PC-9 (cell line): ENCODE measurements at regions of chr2 and their contacts with region 1.

Region 1: DNA sequence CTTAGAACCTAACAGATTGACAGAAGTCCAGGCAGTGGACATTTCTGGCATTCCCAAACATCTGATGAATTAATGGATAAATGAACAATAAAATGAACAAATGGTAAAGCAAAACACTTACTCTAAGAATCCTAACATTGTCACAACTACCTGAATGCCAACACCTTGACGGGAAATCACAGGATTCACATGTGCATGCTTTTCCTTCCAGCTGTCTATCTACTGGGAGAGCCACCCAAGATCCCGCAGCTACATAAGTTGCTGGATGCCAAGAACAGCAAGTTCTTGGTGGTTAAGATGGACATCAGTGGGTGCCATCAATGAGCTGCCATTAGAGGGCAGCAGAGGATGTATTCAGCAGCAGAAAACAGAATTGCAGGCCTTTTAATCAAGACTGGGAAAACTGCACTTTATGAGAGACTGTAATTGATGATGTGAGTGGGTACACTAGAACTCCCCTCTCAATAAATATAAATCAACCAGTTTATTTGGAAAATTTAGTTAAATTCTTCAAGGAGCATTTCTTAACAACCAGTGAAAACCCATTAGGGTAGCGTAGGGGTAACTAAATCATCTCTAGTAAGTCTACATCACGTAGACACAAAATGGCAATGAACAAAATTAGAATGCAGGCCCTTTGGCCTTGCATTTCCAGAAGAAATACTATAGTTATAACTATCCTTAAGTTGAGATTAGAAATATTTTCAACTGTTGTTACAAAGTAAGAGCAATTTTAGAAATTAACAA is 45.6 kb downstream of the SESTD1 start:
- DNase-seq: peak; percentile 48 to 71
- H3K4me3 ChIP-seq: no peak overlapping the region
- H3K27ac ChIP-seq: no peak overlapping the region
- H3K4me1 ChIP-seq: peaks cover 15% of the 10 kb centered on the region; the same call in 1 of the 2 replicates
- H3K27me3 ChIP-seq: no peaks in the 10 kb centered on the region
- CTCF ChIP-seq: peak; percentile 99

Region 2: GRCh38 chr2:179340668-179341067 is 121.6 kb after region 1 on chr2:
- CTCF ChIA-PET with region 1: interaction called, 3 read pairs
- POLR2A ChIA-PET with region 1: no interaction called
- intact Hi-C with region 1: loop called (anchors 1 kb)
- DNase-seq: peak in 1 of 2 experiments; percentile 35
- H3K4me3 ChIP-seq: no peak overlapping the region
- H3K27ac ChIP-seq: no peak overlapping the region
- H3K4me1 ChIP-seq: peaks cover 22% of the 10 kb centered on the region
- H3K27me3 ChIP-seq: no peaks in the 10 kb centered on the region
- CTCF ChIP-seq: peak; percentile 72

Region 3: DNA sequence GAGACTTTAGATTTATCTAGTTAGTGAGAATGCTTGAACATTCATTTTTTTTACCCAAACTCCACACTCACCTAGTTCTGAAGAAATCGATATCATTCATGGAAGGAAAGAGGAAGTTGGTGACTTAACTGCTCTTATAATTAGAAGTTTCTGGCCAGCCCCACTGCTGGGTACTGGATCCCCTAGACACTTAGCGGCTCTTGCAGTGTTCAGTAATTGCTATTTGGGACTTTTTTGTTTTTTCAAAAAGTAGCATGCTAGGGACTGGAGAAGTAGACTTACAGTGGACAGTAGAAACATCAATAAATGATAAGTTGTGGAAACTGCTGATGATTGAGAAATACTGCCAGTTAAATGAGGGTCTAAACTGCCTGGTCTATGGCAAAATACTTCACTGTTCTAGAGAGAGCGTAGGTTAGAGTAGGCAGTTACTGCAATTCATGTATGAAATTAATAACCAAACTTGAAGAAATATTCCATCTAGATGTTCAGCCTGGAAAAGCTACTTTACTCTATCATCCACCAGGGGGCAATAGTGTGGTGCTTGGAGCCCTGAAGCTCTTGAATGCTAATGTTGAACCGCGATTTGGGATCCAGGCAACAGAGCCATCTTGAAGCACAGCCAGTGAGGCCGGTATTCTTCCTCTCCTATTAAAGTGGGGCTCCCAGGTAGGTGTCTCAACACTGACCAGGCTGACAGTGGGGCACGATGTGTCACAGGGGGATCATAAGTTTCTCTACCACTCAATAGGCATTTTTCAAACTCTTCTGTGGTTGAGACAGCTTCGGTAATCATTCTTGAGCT is 191.7 kb after region 1 on chr2:
- CTCF ChIA-PET with region 1: no interaction called
- POLR2A ChIA-PET with region 1: no interaction called
- intact Hi-C with region 1: loop called (anchors 1 kb)
- DNase-seq: peak; percentile 44 to 50
- H3K4me3 ChIP-seq: no peak overlapping the region
- H3K27ac ChIP-seq: no peak overlapping the region
- H3K4me1 ChIP-seq: no peaks in the 10 kb centered on the region
- H3K27me3 ChIP-seq: no peaks in the 10 kb centered on the region
- CTCF ChIP-seq: peak; percentile 82

Region 4: DNA sequence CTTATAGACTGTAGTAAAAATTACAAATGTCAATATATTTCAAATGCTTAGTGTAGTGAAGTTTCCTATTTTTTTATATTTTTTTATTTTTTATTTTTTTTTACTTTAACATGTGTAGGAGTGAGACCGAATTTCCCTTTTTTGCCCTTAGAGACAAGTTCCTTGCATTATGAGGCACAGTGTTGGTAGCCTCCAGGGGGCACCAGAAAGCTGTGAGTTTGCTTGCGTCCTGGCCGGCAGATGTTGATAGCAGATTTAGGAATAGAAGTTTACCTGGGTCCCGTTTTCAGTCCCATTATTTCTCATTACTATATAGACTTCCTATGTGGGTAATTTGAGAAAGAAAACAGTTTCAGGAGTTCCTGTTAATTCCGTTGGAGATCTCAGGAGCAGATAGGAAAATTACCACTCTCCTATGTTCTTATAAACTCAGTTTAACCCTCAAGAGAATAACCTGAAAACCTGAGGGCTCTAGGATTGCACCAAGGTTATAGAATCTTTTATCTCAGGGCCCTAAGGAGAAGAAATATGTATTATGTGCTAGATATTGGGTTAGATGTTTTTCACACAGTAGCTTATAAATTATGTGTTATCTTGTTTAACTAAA is 203.1 kb after region 1 on chr2:
- CTCF ChIA-PET with region 1: no interaction called
- POLR2A ChIA-PET with region 1: no interaction called
- intact Hi-C with region 1: loop called (anchors 2 kb)
- DNase-seq: peak; percentile 56 to 83
- H3K4me3 ChIP-seq: no peak overlapping the region
- H3K27ac ChIP-seq: no peak overlapping the region
- H3K4me1 ChIP-seq: no peaks in the 10 kb centered on the region
- H3K27me3 ChIP-seq: no peaks in the 10 kb centered on the region
- CTCF ChIP-seq: peak; percentile 88

Region 5: GRCh38 chr2:179440642-179441251 is 221.7 kb after region 1 on chr2:
- CTCF ChIA-PET with region 1: no interaction called
- POLR2A ChIA-PET with region 1: no interaction called
- intact Hi-C with region 1: loop called (anchors 1 kb)
- DNase-seq: peak in 1 of 2 experiments; percentile 55
- H3K4me3 ChIP-seq: no peak overlapping the region
- H3K27ac ChIP-seq: no peak overlapping the region
- H3K4me1 ChIP-seq: no peaks in the 10 kb centered on the region
- H3K27me3 ChIP-seq: no peaks in the 10 kb centered on the region
- CTCF ChIP-seq: peak; percentile 96

Region 6: DNA sequence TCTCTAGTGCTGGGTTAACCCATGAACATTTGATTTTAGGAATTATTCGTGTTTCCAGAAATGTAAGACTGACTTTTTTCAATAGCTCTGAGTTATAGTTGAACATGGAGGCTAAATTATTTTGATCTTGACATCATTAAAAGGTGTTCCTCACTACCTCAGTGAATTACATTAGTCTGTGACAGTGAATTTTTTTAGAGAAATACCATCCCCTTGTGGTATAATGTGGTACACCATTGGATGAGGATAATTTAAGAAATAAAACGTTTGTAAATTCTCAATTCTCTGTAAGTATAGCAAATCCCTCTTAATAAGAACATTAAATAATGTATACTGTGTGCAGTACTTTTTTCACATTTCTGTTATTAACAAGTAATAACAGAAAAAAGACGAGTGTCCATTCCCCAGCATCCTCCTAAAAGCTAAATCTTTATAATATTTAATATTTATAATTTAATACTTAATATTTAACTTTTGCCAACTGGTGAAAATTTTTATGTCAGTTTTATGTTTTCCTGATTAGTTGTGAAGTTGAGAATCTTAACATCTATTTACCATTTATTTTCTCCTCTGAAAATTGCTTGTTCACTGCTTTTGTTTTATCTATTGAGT is 858.4 kb after region 1 on chr2:
- CTCF ChIA-PET with region 1: no interaction called
- POLR2A ChIA-PET with region 1: no interaction called
- intact Hi-C with region 1: loop called (anchors 5 kb)
- DNase-seq: no peak
- H3K4me3 ChIP-seq: no peak overlapping the region
- H3K27ac ChIP-seq: no peak overlapping the region
- H3K4me1 ChIP-seq: no peaks in the 10 kb centered on the region
- H3K27me3 ChIP-seq: no peaks in the 10 kb centered on the region
- CTCF ChIP-seq: peak; percentile 95